Testis (tissue), 5 donors: ENCODE measurements at regions of chr10 and their contacts with region 1.

Region 1: DNA sequence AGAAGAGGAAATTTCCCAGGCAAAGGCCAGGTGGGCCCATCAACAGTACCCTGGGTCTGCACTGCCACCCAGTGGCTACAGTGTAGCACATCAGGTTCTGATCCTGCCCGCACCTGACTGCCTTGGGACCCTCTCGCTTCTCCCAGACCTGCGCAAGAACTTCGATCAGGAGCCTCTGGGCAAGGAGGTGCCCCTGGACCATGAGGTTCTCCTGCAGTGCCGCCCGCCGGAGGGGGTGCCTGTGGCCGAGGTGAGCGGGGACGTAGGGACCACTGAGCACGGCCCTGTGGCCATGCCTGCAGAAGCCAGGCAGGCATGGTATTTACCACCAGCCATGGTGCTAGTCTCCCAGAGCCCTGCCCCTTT is 33.9 kb upstream of the SLC29A3 start:
- DNase-seq: peak; percentile 59
- H3K4me3 ChIP-seq: no peak overlapping the region
- H3K27ac ChIP-seq: no peak overlapping the region
- H3K4me1 ChIP-seq: peaks cover 4% of the 10 kb centered on the region
- H3K27me3 ChIP-seq: no peaks in the 10 kb centered on the region
- CTCF ChIP-seq: peak; percentile 55 to 67 (median 65)
- POLR2A ChIP-seq: no peak

Region 2: GRCh38 chr10:70903262-70903921 is 381.8 kb before region 1 on chr10:
- intact Hi-C with region 1: loop called (anchors 10 kb)
- DNase-seq: peak; percentile 77
- H3K4me3 ChIP-seq: no peak overlapping the region
- H3K27ac ChIP-seq: no peak overlapping the region
- H3K4me1 ChIP-seq: no peaks in the 10 kb centered on the region
- H3K27me3 ChIP-seq: no peaks in the 10 kb centered on the region
- CTCF ChIP-seq: peak; percentile 49 to 87 (median 83)
- POLR2A ChIP-seq: no peak

Region 3: DNA sequence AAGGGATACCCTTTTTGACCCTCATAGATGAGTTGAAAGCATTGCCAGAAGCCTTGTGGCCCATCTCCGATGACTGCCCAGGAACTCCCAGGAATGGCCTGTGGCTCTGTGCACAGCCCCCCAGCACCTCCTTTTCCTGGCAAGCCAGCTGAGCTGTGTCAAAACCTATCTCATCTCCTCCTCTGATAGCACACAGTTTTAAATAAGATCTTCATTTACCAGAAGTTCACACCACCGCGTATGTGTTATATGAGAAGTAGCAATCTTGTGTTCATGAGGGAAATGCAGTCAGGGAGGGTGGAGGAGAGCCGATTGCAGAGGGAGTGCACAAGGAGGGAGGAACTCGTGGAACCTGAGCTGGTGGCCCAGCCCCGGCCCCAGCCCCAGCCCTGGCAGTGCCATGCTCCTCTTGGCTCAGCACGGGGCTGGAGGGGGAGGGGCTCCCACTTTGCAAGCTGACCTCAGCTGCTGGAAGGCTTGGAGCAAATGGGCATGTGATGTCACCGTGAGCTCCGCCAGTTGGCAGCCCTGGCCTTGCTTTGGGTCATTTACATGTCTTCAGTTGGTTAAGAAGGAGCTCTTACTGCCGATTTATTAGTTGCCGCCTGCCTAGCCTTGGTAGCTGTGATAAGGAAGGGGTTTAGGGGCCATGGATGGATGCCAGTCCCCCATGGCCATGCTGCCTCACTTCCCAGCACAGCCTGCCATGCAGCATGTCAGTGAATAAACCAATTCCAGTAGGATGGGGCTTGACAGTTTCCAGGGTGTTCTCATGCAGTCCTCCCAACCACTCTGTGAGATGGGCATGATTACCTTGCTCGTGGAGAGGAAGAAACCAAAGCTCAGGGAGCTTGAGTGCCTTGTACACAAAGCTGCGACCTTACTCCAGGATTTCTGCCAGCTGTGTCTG is 52.8 kb before region 1 on chr10:
- intact Hi-C with region 1: no loop called
- DNase-seq: peak; percentile 92
- H3K4me3 ChIP-seq: no peak overlapping the region
- H3K27ac ChIP-seq: peak overlapping the region; percentile 45 to 50
- H3K4me1 ChIP-seq: peaks cover 64% of the 10 kb centered on the region
- H3K27me3 ChIP-seq: no peaks in the 10 kb centered on the region
- CTCF ChIP-seq: no peak
- POLR2A ChIP-seq: no peak